ENCODE measurements at regions of chr7 and their contacts with region 1.

Region 1: GRCh38 chr7:107304636-107305035 is 135.8 kb downstream of the HBP1 start:
- DNase-seq: no peak

Region 2: GRCh38 chr7:106938803-106939202 is 365.8 kb before region 1 on chr7:
- intact Hi-C with region 1: loop called in 1 of 2 experiments (anchors 5 kb)
- DNase-seq: no peak

Region 3: GRCh38 chr7:107035446-107035845 is 269.2 kb before region 1 on chr7:
- intact Hi-C with region 1: no loop called
- DNase-seq: no peak

Measured in posterior vena cava (tissue), 2 donors.